ENCODE measurements at regions of chr3 and their contacts with region 1.

Region 1: GRCh38 chr3:126399351-126399735 is 4.6 kb downstream of the CFAP100 start:
- DNase-seq: peak; percentile 23 to 93
- H3K4me3 ChIP-seq: no peak overlapping the region
- H3K27ac ChIP-seq: peak overlapping the region; percentile 63
- H3K4me1 ChIP-seq: peaks cover 14% of the 10 kb centered on the region
- H3K27me3 ChIP-seq: no peaks in the 10 kb centered on the region
- CTCF ChIP-seq: no peak

Region 2: GRCh38 chr3:126226374-126226773 is 173.0 kb before region 1 on chr3:
- CTCF ChIA-PET with region 1: no interaction called
- POLR2A ChIA-PET with region 1: interaction called, 20 read pairs
- intact Hi-C with region 1: no loop called
- DNase-seq: no peak
- H3K4me3 ChIP-seq: no peak overlapping the region
- H3K27ac ChIP-seq: no peak overlapping the region
- H3K4me1 ChIP-seq: no peaks in the 10 kb centered on the region
- H3K27me3 ChIP-seq: no peaks in the 10 kb centered on the region
- CTCF ChIP-seq: no peak

Region 3: GRCh38 chr3:127304121-127304744 is 904.9 kb after region 1 on chr3:
- CTCF ChIA-PET with region 1: no interaction called
- POLR2A ChIA-PET with region 1: interaction called, 42 read pairs
- intact Hi-C with region 1: no loop called
- DNase-seq: peak; percentile 50 to 71
- H3K4me3 ChIP-seq: peak overlapping the region; percentile 40; the same call in 1 of the 2 replicates
- H3K27ac ChIP-seq: no peak overlapping the region
- H3K4me1 ChIP-seq: peaks cover 9% of the 10 kb centered on the region; the same call in 1 of the 2 replicates
- H3K27me3 ChIP-seq: peaks cover 44% of the 10 kb centered on the region
- CTCF ChIP-seq: peak; percentile 14; the same call in 1 of the 2 replicates

Measured in PC-9 (cell line).